ENCODE measurements at regions of chr6 and their contacts with region 1.

Region 1: DNA sequence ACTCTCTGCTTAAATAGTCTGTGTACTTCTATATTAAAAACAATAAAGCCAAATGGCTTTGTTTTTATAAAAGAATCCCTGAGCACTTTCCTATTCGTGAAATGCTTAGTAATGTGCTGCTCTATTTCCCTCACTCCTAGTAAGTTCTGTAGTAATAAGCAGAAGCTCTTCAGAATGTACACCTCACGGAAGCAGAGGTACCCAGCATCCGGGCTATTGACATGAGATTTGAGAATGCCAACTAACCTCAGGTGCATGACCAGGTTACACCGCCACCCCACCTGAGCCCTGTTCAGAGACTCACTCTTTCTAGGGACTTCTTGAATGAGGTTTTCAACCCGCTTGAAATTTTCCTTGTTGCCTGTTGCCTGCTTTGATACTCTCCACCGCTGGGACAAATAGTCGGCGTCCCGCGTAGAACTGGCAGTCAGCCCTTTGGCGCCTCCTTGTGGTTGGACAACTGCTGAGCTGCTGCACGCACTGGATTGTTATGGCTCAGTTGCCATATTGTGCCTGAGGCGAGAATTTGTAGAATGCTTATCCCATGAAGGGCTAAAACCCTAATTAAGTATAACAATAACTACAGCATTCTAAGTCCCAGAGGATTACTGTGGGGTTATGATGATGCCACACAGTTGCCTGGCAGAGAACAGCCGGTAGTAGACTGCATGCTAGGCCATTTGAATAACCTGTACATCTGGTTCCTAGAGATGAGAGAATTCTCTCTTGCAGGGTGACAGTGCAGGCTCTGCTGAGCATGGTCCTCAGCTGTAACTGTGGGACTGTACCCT is 95.4 kb downstream of the KHDC1L start:
- DNase-seq: peak; percentile 80
- ATAC-seq: peak; percentile 37

Region 2: GRCh38 chr6:72622094-72622940 is 507.5 kb before region 1 on chr6:
- intact Hi-C with region 1: loop called (anchors 10 kb)
- DNase-seq: no peak
- ATAC-seq: no peak

Region 3: DNA sequence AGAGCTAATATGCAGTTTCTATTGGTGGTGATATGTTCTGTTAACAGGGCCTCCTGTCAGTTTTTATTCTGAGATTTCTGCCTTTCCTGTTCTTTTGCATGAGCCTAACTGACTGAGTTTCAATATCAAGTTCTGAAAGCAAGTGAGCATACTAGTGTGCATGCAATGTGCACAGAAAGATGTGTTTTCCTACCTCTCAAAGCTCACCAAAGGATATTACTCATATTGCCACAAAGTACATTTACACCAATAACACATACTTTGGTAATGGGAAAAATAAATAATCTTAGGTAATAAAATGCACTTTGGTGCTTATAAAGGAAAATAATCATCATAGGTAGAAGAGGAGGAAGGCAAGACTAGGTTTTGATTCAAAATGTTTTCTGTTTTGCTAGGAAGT is 99.6 kb before region 1 on chr6:
- intact Hi-C with region 1: no loop called
- DNase-seq: no peak
- ATAC-seq: no peak